HepG2 (cell line): ENCODE measurements at regions of chr20 and their contacts with region 1.

Region 1: GRCh38 chr20:17938871-17939619 is 29.5 kb downstream of the SNX5 start:
- DNase-seq: peak; percentile 76
- ATAC-seq: peak; percentile 76
- H3K4me3 ChIP-seq: peak overlapping the region; percentile 5 to 62 (median 32); a peak in 3 of 6 replicates
- H3K27ac ChIP-seq: peak overlapping the region; percentile 43
- H3K4me1 ChIP-seq: peaks cover 47% of the 10 kb centered on the region
- H3K27me3 ChIP-seq: peaks cover 6 to 22% of the 10 kb centered on the region in 2 experiments; a peak in 4 of 5 replicates
- CTCF ChIP-seq: peak; percentile 99
- EP300 ChIP-seq: no peak
- POLR2A ChIP-seq: peak in 1 of 2 experiments; percentile 44; a peak in 2 of 4 replicates
- RAD21 ChIP-seq: peak; percentile 99

Region 2: DNA sequence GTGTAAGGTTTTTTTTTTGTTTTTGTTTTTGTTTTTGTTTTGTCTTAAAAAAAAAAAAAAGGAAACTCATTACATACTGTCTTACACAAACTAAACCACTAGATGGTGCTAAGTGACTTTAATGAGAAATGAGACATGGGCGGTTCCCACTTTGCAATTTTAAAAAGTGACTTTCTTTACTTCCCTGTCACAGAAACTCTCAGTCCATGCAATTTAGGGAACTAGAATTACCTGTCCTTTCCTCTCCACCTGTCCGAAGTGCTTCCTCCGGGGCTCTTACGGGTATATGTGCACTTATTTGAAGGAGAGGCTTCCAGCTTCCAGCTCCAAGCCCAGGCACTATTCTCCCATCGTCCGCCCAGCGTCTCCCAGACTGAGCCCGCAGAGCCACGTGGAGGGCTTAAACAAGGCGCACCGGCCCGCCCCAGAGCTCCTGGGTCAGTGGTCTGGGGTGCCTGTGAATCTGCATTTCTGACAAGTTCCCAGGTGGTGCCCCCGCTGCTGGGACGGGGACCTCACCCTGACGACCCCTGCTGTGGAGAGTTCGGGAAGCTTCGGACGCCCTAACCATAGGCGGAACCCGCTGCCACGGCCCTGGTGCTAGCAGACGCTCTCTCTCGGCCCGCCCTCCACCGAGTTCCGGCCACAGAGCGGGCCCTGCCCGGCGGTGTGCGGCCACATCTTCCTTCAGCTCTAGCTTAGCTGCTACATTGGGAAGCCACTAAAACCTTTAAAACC is 434.0 kb before region 1 on chr20:
- CTCF ChIA-PET with region 1: interaction called, 10 read pairs
- POLR2A ChIA-PET with region 1: interaction called, 6 read pairs
- in situ Hi-C with region 1: no loop called
- intact Hi-C with region 1: loop called (anchors 1 kb)
- DNase-seq: peak; percentile 64
- ATAC-seq: peak; percentile 86
- H3K4me3 ChIP-seq: peak overlapping the region; percentile 35 to 74 (median 51)
- H3K27ac ChIP-seq: no peak overlapping the region
- H3K4me1 ChIP-seq: peaks cover 19% of the 10 kb centered on the region
- H3K27me3 ChIP-seq: peaks cover 1 to 74% of the 10 kb centered on the region in 2 experiments; a peak in 4 of 5 replicates
- CTCF ChIP-seq: peak; percentile 79
- EP300 ChIP-seq: no peak
- POLR2A ChIP-seq: no peak
- RAD21 ChIP-seq: peak; percentile 69

Region 3: GRCh38 chr20:17654649-17655285 is 284.3 kb before region 1 on chr20:
- CTCF ChIA-PET with region 1: interaction called, 12 read pairs
- POLR2A ChIA-PET with region 1: no interaction called
- in situ Hi-C with region 1: no loop called
- intact Hi-C with region 1: loop called (anchors 1 kb)
- DNase-seq: peak; percentile 53
- ATAC-seq: no peak
- H3K4me3 ChIP-seq: no peak overlapping the region
- H3K27ac ChIP-seq: no peak overlapping the region
- H3K4me1 ChIP-seq: no peaks in the 10 kb centered on the region
- H3K27me3 ChIP-seq: no peaks in the 10 kb centered on the region
- CTCF ChIP-seq: peak; percentile 63
- EP300 ChIP-seq: no peak
- POLR2A ChIP-seq: no peak
- RAD21 ChIP-seq: no peak; the same call in 1 of the 2 replicates

Region 4: GRCh38 chr20:17721802-17722486 is 217.1 kb before region 1 on chr20:
- CTCF ChIA-PET with region 1: no interaction called
- POLR2A ChIA-PET with region 1: no interaction called
- in situ Hi-C with region 1: no loop called
- intact Hi-C with region 1: loop called (anchors 5 kb)
- DNase-seq: peak; percentile 99
- ATAC-seq: peak; percentile 91
- H3K4me3 ChIP-seq: peak overlapping the region in 1 of 3 experiments; percentile 8; a peak in 2 of 6 replicates
- H3K27ac ChIP-seq: peak overlapping the region; percentile 55
- H3K4me1 ChIP-seq: peaks cover 44% of the 10 kb centered on the region
- H3K27me3 ChIP-seq: peaks cover 4 to 65% of the 10 kb centered on the region in 2 experiments; a peak in 4 of 5 replicates
- CTCF ChIP-seq: peak; percentile 35; the same call in 1 of the 2 replicates
- EP300 ChIP-seq: peak; percentile 99; a peak in 3 of 4 replicates
- POLR2A ChIP-seq: no peak
- RAD21 ChIP-seq: peak; percentile 59; the same call in 1 of the 2 replicates

Region 5: DNA sequence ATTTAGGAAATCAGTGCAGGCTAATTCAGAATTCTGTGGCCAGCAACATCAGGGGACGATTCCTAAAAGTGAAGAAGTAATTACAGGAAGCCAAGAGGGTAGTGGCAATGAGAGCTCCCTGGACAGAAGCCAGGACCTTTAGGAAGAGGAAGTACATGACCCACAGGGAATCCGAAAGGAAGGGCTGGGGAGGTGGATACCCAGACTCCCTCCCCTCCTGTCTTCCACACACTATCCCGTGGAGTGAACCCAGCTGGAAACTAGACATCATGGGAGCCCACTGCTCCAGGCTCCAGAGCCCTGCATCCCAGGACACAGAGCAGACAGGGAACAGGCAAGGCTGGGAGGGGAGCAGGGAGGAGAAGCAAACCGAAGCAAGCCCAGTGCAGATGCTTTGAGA is 53.5 kb before region 1 on chr20:
- CTCF ChIA-PET with region 1: no interaction called
- POLR2A ChIA-PET with region 1: no interaction called
- in situ Hi-C with region 1: no loop called
- intact Hi-C with region 1: no loop called
- DNase-seq: no peak
- ATAC-seq: no peak
- H3K4me3 ChIP-seq: no peak overlapping the region
- H3K27ac ChIP-seq: no peak overlapping the region
- H3K4me1 ChIP-seq: peaks cover 83% of the 10 kb centered on the region
- H3K27me3 ChIP-seq: no peaks in the 10 kb centered on the region
- CTCF ChIP-seq: no peak
- EP300 ChIP-seq: no peak
- POLR2A ChIP-seq: no peak
- RAD21 ChIP-seq: no peak

Region 6: GRCh38 chr20:17968366-17969279 is 29.6 kb after region 1 on chr20 and contains the starts of genes MGME1 and SNX5:
- CTCF ChIA-PET with region 1: no interaction called
- POLR2A ChIA-PET with region 1: interaction called, 17 read pairs
- in situ Hi-C with region 1: no loop called
- intact Hi-C with region 1: no loop called
- DNase-seq: peak; percentile 100
- ATAC-seq: peak; percentile 93
- H3K4me3 ChIP-seq: peak within 1 kb of the TSS; percentile 89 to 95 (median 89)
- H3K27ac ChIP-seq: peak within 1 kb of the TSS; percentile 97
- H3K4me1 ChIP-seq: peaks cover 52% of the 10 kb centered on the region
- H3K27me3 ChIP-seq: no peaks in the 10 kb centered on the region; a peak in 1 of 5 replicates
- CTCF ChIP-seq: peak; percentile 23
- EP300 ChIP-seq: peak; percentile 69 to 84; a peak in 3 of 4 replicates
- POLR2A ChIP-seq: peak; percentile 100
- RAD21 ChIP-seq: peak; percentile 74
- total RNA-seq, gene MGME1: 66.6 and 79.5 TPM in 2 replicates
- total RNA-seq, gene SNX5: 1,040 and 1,306 TPM in 2 replicates